Activated T-helper 2 cell treated with anti-CD3 and anti-CD28 coated beads, Interferon-gamma antibody, Interleukin-2, Interleukin-4, amounts not matched to agents 10 μg/mL and 5 μg/mL and 100 μg/mL, durations not matched to agents 14 hours and 24 hours and 36 hours (primary cell): ENCODE measurements at regions of chr4 and their contacts with region 1.

Region 1: GRCh38 chr4:109406338-109406931 is 27.2 kb upstream of the SEC24B start:
- DNase-seq: no peak
- H3K4me3 Mint-ChIP-seq: no peak overlapping the region
- H3K27ac Mint-ChIP-seq: no peak overlapping the region
- H3K4me1 Mint-ChIP-seq: no peaks in the 10 kb centered on the region
- H3K27me3 Mint-ChIP-seq: peaks cover 28% of the 10 kb centered on the region

Region 2: DNA sequence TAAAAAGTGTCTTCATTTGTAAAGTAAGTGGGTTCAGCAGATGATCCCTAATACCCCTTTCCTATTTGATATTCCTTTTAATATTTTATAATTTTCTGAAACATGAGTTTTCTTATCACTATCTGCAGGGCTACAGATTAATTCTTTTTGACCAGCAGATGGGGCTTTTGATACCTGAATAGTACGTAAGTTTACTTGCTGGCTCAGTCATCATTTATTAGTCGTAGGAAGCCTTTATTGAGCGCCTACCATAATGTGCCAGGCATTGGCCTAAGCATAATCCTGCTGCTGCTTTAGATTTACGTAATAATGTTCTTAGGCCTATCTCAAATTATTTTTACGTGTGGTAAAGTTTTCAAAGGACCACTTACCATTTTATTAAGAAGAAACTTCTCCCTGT is 723.0 kb before region 1 on chr4:
- intact Hi-C with region 1: loop called (anchors 10 kb)
- DNase-seq: no peak
- H3K4me3 Mint-ChIP-seq: no peak overlapping the region
- H3K27ac Mint-ChIP-seq: no peak overlapping the region
- H3K4me1 Mint-ChIP-seq: peaks cover 2% of the 10 kb centered on the region
- H3K27me3 Mint-ChIP-seq: peaks cover 2% of the 10 kb centered on the region

Region 3: DNA sequence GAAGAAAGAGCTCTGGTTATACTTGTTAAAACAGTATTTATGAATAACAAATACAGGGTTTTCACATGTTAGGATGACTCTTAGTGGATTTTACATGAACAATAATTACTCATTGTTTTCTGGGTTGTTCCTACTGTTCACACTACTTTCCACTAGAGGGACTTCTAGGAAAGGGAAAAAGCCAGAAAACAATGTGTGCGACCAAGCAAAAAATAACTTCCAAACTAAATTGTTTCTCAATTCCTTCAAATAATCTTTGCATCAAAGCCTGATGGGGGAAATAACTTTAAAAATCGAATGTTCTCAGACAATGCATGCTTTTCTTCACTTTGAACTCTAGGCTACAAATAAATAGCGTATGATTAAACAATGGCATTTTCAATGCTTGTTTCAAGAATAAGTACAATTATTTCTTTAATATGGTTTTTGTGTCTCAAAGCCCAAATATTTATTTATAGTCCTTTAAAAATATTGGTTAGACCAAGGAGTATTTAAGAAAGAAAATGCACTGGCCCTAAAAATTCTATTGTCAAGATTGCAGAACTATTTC is 571.5 kb before region 1 on chr4:
- intact Hi-C with region 1: loop called (anchors 1 kb)
- DNase-seq: no peak
- H3K4me3 Mint-ChIP-seq: no peak overlapping the region
- H3K27ac Mint-ChIP-seq: no peak overlapping the region
- H3K4me1 Mint-ChIP-seq: peaks cover 14% of the 10 kb centered on the region
- H3K27me3 Mint-ChIP-seq: peaks cover 17% of the 10 kb centered on the region

Region 4: GRCh38 chr4:109332926-109333464 is 73.4 kb before region 1 on chr4:
- intact Hi-C with region 1: no loop called
- DNase-seq: no peak
- H3K4me3 Mint-ChIP-seq: no peak overlapping the region
- H3K27ac Mint-ChIP-seq: no peak overlapping the region
- H3K4me1 Mint-ChIP-seq: no peaks in the 10 kb centered on the region
- H3K27me3 Mint-ChIP-seq: peaks cover 22% of the 10 kb centered on the region